H1 (cell line): ENCODE measurements at regions of chr2 and their contacts with region 1.

Region 1: GRCh38 chr2:240972636-240973521 is 25.5 kb upstream of the SNED1 start:
- DNase-seq: no peak
- H3K4me3 ChIP-seq: no peak overlapping the region
- H3K27ac ChIP-seq: no peak overlapping the region
- H3K4me1 ChIP-seq: no peaks in the 10 kb centered on the region
- H3K27me3 ChIP-seq: no peaks in the 10 kb centered on the region
- CTCF ChIP-seq: no peak
- EP300 ChIP-seq: no peak
- POLR2A ChIP-seq: no peak
- RAD21 ChIP-seq: no peak

Region 2: DNA sequence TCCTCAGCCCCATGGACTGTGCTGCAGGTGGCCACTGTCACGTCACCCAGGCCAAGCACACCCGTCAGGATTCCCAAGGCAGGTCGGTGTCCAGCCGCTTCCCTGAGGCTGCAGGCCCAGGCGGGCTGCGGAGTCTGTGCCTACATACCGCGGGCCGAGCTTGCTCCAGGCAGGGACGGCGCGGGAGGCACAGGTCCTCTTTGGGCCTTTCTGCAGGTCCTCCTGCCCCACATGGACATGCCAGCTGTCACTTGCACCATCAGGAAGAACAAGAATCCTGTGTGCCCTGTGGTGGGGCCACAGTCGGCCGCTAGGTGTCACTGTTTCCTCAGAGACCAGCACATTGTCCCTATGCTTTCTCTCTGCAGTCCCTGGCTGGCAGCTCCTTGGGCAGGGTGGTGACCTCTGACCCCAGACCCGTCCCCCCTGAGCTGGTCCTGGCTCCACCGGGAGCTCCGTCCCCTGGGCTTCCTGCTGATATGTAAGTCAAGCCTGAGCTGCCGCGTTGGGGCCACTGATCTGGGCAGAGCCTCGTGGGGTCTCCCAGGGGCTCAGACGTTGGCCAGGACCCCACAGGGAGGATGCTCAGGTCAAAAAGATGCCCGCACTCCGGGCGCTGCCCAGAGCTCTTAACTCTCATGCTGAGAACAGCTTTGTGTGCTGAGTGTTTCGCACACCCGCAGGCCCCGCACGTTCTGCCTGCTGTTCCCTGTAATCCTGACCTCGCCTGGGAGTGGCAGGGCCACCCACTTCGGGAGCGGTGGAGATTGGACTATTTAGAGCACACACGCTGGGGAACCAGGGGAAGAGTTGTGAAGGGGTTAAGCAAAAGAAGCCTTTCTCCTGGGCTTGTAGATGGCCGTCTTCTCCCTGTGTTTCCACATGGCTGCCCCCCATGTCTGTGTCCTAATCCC is 121.5 kb before region 1 on chr2:
- CTCF ChIA-PET with region 1: no interaction called
- POLR2A ChIA-PET with region 1: no interaction called
- DNase-seq: peak; percentile 78 to 98
- H3K4me3 ChIP-seq: no peak overlapping the region
- H3K27ac ChIP-seq: no peak overlapping the region
- H3K4me1 ChIP-seq: peaks cover 0 to 4% (median under 1%) of the 10 kb centered on the region in 4 experiments; a peak in 2 of 7 replicates
- H3K27me3 ChIP-seq: no peaks in the 10 kb centered on the region
- CTCF ChIP-seq: peak in 2 of 3 experiments; percentile 92 to 99; a peak in 3 of 4 replicates
- EP300 ChIP-seq: no peak
- POLR2A ChIP-seq: no peak
- RAD21 ChIP-seq: peak; percentile 98

Region 3: GRCh38 chr2:240983361-240983995 is 10.6 kb after region 1 on chr2:
- CTCF ChIA-PET with region 1: interaction called, 15 read pairs
- POLR2A ChIA-PET with region 1: interaction called, 4 read pairs
- DNase-seq: peak; percentile 68 to 81
- H3K4me3 ChIP-seq: peak overlapping the region in 3 of 4 experiments; percentile 10 to 41 (median 19); a peak in 3 of 8 replicates
- H3K27ac ChIP-seq: no peak overlapping the region
- H3K4me1 ChIP-seq: peaks cover 0 to 3% (median 0%) of the 10 kb centered on the region in 4 experiments; a peak in 1 of 7 replicates
- H3K27me3 ChIP-seq: peaks cover 0 to 3% (median 3%) of the 10 kb centered on the region in 4 experiments; a peak in 3 of 7 replicates
- CTCF ChIP-seq: peak in 2 of 3 experiments; percentile 93 to 99; a peak in 3 of 4 replicates
- EP300 ChIP-seq: no peak
- POLR2A ChIP-seq: no peak
- RAD21 ChIP-seq: peak; percentile 63 to 81